MCF 10A (cell line): ENCODE measurements at regions of chr11 and their contacts with region 1.

Region 1: DNA sequence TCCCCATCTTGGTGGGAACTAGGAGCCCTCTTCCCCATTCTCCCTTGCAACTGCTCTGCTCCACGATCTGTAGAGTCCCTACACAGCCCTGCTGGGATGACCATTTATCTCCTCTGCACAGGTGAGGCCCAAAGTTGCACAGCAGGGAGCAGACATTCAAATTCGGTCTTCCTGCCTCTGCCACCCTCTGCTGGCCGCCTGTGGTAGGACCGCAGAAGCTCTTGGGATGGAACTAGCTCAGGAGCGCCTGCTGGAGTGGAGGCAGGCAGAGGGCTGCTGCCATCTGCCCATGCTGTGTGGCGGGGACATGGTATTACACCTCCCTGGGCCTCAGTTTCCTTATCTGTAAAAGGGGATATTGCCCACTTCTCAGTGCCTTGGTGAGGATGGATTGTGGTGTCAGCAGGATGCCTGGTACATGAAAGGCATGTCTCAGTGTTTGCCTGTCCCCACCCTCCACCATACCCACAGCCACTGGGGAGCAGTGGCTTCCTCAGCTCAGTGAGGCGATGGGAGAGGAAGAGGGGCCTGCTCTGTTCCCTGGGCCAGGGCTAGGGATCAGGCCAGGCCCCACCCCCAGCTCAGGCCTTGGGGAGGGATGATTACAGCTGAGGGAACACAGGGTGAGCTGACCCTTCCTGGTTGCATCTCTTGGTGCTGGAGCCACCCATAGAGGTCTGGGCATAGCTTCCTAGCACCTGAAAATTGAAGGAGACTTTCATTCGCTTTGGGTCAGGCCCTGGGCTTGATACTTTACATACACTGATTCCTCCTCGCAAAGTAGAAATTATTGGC is 11.3 kb upstream of the OMP start:
- DNase-seq: peak; percentile 77
- H3K4me3 Mint-ChIP-seq: no peak overlapping the region
- H3K27ac Mint-ChIP-seq: no peak overlapping the region
- H3K4me1 Mint-ChIP-seq: no peaks in the 10 kb centered on the region
- H3K27me3 Mint-ChIP-seq: no peaks in the 10 kb centered on the region
- CTCF ChIP-seq: peak; percentile 81

Region 2: GRCh38 chr11:76131671-76132631 is 959.4 kb before region 1 on chr11:
- CTCF ChIA-PET with region 1: no interaction called
- POLR2A ChIA-PET with region 1: no interaction called
- intact Hi-C with region 1: no loop called
- DNase-seq: no peak
- H3K4me3 Mint-ChIP-seq: no peak overlapping the region
- H3K27ac Mint-ChIP-seq: no peak overlapping the region
- H3K4me1 Mint-ChIP-seq: no peaks in the 10 kb centered on the region
- H3K27me3 Mint-ChIP-seq: no peaks in the 10 kb centered on the region
- CTCF ChIP-seq: no peak

Region 3: DNA sequence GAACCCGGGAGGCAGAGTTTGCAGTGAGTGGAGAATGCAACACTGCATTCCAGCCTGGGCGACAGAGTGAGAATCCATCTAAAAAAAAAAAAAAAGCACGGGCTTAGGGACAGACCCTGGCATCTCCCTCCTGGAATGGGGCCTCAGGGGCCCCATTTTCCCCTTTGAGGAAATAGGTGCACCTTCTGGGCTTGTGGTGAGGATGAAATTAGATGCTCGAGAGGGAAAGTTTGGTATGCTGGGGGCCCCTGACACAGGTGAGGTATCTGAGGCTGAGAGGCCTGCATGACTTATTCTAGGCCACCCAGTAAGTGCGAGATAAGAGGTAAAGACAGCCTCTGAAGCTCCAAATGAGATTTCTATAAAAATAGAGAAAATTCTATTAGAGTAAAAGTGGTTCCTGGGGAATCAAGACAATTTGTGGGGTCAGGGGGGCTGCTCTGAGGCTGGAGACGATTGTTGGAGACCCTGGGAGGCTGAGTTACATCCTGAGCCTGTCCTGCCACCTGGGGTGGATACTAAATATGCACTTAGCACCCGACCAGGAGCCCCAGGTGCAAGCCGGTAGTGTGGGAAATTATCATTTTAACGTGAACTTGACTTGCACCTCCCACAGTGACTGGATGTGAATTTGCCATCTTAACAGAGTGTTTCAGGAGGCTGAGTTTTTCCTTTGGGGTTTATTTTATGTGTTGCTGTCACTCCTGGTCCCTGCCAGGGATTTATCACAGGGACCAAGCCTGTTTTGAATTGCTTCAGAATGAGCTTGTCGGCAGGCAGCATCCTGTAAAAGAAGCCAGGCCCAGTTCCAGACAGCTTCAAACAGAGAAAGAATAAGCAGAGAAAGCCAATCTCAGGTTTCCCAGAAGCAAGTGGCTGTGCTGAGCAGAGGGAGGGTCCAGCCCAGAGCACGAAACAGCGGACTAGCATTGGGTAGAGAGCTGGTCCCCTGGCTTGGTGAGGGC is 356.6 kb before region 1 on chr11:
- CTCF ChIA-PET with region 1: interaction called, 33 read pairs
- POLR2A ChIA-PET with region 1: no interaction called
- intact Hi-C with region 1: loop called (anchors 10 kb)
- DNase-seq: no peak
- H3K4me3 Mint-ChIP-seq: no peak overlapping the region
- H3K27ac Mint-ChIP-seq: no peak overlapping the region
- H3K4me1 Mint-ChIP-seq: no peaks in the 10 kb centered on the region
- H3K27me3 Mint-ChIP-seq: peaks cover 13% of the 10 kb centered on the region
- CTCF ChIP-seq: no peak

Region 4: GRCh38 chr11:77024745-77025144 is 66.6 kb before region 1 on chr11:
- CTCF ChIA-PET with region 1: interaction called, 11 read pairs
- POLR2A ChIA-PET with region 1: interaction called, 3 read pairs
- intact Hi-C with region 1: no loop called
- DNase-seq: no peak
- H3K4me3 Mint-ChIP-seq: no peak overlapping the region
- H3K27ac Mint-ChIP-seq: no peak overlapping the region
- H3K4me1 Mint-ChIP-seq: peaks cover 13% of the 10 kb centered on the region
- H3K27me3 Mint-ChIP-seq: peaks cover 8% of the 10 kb centered on the region
- CTCF ChIP-seq: no peak

Region 5: GRCh38 chr11:77066229-77067042 is 24.9 kb before region 1 on chr11 and contains the start of gene CAPN5:
- CTCF ChIA-PET with region 1: interaction called, 15 read pairs
- POLR2A ChIA-PET with region 1: interaction called, 3 read pairs
- intact Hi-C with region 1: loop called (anchors 1 kb)
- DNase-seq: peak; percentile 82
- H3K4me3 Mint-ChIP-seq: peak within 1 kb of the TSS; percentile 68
- H3K27ac Mint-ChIP-seq: no peak within 1 kb of the TSS
- H3K4me1 Mint-ChIP-seq: no peaks in the 10 kb centered on the region
- H3K27me3 Mint-ChIP-seq: no peaks in the 10 kb centered on the region
- CTCF ChIP-seq: no peak
- total RNA-seq, gene CAPN5: 0.26 and 0.49 TPM in 2 replicates

Region 6: DNA sequence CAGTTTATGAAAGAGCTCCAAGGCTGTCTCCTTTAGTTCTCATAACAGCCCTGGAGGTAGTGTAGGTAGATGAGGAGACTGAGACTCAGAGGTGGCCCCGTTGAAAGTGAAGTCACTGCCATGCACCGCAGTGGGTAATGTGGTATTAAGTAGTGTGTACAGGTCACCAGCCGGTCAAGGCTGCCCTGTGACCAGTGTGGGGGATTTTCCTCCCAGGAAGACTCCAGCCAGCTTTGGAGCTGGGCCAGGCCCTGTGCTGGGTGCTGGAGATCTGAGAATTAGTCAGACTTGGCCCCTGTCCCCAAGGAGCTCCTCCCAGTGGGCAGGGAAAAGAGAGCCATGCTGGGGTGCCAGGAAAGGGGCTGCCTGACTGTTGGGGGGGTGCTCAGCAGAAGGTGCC is 16.6 kb after region 1 on chr11:
- CTCF ChIA-PET with region 1: interaction called, 44 read pairs
- POLR2A ChIA-PET with region 1: no interaction called
- intact Hi-C with region 1: no loop called
- DNase-seq: peak; percentile 92
- H3K4me3 Mint-ChIP-seq: no peak overlapping the region
- H3K27ac Mint-ChIP-seq: no peak overlapping the region
- H3K4me1 Mint-ChIP-seq: peaks cover 14% of the 10 kb centered on the region
- H3K27me3 Mint-ChIP-seq: no peaks in the 10 kb centered on the region
- CTCF ChIP-seq: no peak

Region 7: DNA sequence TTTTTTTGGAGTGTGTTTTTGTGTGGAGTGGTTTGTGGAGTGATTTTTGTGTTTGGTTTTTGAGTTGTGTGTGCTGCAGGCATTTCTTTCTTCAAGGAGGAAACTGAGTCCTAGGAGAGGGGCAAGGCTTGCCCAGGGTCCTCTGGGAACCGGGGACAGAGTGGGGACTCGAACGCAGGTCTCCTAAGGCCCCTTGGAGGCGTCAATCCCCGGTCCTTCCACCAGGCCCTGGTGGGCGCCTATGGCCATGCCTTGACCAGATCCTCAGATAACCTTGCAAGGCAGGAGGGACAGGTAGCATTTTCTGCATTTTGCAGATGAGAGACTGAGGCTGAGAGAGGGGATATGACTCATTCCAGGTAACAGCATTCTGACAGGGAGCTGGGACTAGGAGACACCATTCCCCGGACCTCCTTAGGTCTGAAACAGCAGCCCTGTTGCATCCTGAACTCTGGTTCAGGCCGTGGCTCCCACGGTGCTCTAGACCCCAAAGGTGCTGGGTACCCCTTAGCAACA is 75.8 kb after region 1 on chr11:
- CTCF ChIA-PET with region 1: no interaction called
- POLR2A ChIA-PET with region 1: no interaction called
- intact Hi-C with region 1: no loop called
- DNase-seq: no peak
- H3K4me3 Mint-ChIP-seq: no peak overlapping the region
- H3K27ac Mint-ChIP-seq: no peak overlapping the region
- H3K4me1 Mint-ChIP-seq: no peaks in the 10 kb centered on the region
- H3K27me3 Mint-ChIP-seq: no peaks in the 10 kb centered on the region
- CTCF ChIP-seq: no peak

Region 8: DNA sequence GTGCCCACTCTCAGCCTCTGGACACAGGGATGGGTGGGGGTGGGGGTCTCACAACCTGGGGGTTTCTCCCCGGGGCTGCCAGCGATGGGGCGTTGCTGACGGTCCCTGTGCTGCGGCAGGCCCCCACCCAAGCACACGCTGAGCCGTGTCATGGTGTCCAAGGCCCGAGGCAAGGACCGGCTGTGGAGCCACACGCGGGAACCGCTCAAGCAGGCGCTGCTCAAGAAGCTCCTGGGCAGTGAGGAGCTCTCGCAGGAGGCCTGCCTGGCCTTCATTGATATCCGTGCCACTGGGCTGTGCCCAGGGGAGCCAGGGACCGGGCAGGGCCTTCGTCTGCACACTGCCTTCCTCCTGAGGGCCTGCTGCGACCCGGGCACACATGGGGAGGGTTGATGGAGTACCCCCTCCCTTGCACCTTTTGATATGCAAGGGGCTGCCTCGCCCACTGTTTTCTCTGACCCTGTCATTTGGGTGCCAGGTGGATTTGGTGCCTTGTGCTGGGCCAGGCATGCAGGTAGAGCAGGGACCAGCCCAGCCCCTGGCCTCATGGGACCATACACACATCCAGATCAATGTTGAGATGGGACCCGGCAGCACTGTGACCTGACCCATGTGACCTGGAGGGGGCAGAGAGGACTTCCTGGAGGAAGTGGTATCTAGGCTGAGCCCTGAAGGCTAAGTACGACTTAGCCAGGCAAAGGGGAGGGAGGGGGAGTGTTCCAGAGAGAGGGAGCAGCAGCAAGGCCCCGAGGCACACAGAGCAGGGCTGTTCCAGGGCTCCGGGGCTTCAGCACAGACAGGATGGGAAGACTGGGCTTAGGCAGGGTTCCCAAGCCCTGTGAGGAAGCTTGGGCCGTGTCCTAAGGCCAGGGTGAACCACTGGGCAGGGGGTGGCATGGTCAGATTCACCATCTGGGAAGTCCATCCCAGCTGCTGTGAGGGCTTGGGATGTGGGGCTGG is 111.9 kb after region 1 on chr11:
- CTCF ChIA-PET with region 1: no interaction called
- POLR2A ChIA-PET with region 1: no interaction called
- intact Hi-C with region 1: no loop called
- DNase-seq: no peak
- H3K4me3 Mint-ChIP-seq: no peak overlapping the region
- H3K27ac Mint-ChIP-seq: no peak overlapping the region
- H3K4me1 Mint-ChIP-seq: no peaks in the 10 kb centered on the region
- H3K27me3 Mint-ChIP-seq: no peaks in the 10 kb centered on the region
- CTCF ChIP-seq: no peak